Endothelial cell of umbilical vein (primary cell): ENCODE measurements at regions of chr6 and their contacts with region 1.

Region 1: GRCh38 chr6:140857739-140858380 is 1274.9 kb upstream of the GJE1 start:
- DNase-seq: peak; percentile 89
- H3K4me3 ChIP-seq: no peak overlapping the region
- H3K27ac ChIP-seq: peak overlapping the region; percentile 74
- H3K4me1 ChIP-seq: peaks cover 26% of the 10 kb centered on the region
- H3K27me3 ChIP-seq: no peaks in the 10 kb centered on the region
- CTCF ChIP-seq: no peak
- POLR2A ChIP-seq: peak; percentile 41

Region 2: GRCh38 chr6:140572129-140572528 is 285.7 kb before region 1 on chr6:
- CTCF ChIA-PET with region 1: no interaction called
- POLR2A ChIA-PET with region 1: no interaction called
- dilution Hi-C with region 1: no loop called
- intact Hi-C with region 1: loop called (anchors 2 kb)
- DNase-seq: peak; percentile 96
- H3K4me3 ChIP-seq: no peak overlapping the region
- H3K27ac ChIP-seq: peak overlapping the region; percentile 84
- H3K4me1 ChIP-seq: peaks cover 24% of the 10 kb centered on the region
- H3K27me3 ChIP-seq: no peaks in the 10 kb centered on the region
- CTCF ChIP-seq: no peak
- POLR2A ChIP-seq: peak; percentile 44

Region 3: GRCh38 chr6:140660295-140660694 is 197.6 kb before region 1 on chr6:
- CTCF ChIA-PET with region 1: no interaction called
- POLR2A ChIA-PET with region 1: no interaction called
- dilution Hi-C with region 1: no loop called
- intact Hi-C with region 1: no loop called
- DNase-seq: no peak
- H3K4me3 ChIP-seq: no peak overlapping the region
- H3K27ac ChIP-seq: no peak overlapping the region
- H3K4me1 ChIP-seq: peaks cover 5% of the 10 kb centered on the region
- H3K27me3 ChIP-seq: no peaks in the 10 kb centered on the region
- CTCF ChIP-seq: no peak
- POLR2A ChIP-seq: no peak